Heart left ventricle (tissue), 16 donors: ENCODE measurements at regions of chrX and their contacts with region 1.

Region 1: DNA sequence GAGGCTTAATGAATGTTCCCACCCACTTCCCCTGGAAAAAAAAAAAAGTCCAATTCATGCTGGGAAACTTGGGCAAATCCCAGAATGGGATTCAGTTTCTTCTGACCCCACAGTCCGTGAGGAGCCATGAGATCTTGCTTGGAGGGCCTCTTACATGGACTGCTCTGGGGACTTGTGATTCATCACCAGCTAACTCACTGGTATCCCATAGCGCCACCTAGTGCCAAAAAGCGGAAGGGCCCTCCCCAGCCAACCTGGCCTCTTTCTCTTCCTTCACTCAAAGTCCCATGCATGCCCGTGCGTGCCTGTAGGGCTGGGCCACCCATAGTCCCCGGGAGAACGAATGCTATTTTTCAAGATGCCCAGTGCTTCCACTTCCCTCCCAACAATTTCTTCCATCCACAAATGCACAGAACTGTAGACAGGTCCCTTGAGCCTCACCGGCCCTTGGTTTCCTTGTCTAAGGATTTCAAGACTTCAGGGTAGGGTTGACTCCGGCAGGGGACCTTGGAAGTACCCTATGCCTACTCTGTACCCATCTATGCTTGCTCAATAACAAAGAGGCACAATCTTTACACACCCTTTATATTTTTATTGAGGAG is 5.1 kb downstream of the RTL5 start:
- DNase-seq: peak; percentile 80 to 85 (median 82)
- ATAC-seq: peak; percentile 81 to 89 (median 82)
- H3K4me3 ChIP-seq: no peak overlapping the region
- H3K27ac ChIP-seq: peak overlapping the region in 9 of 12 donors; percentile 20 to 80 (median 53)
- H3K4me1 ChIP-seq: peaks cover 0 to 88% (median 27%) of the 10 kb centered on the region in 12 donors
- H3K27me3 ChIP-seq: peaks cover 0 to 36% (median 0%) of the 10 kb centered on the region in 9 donors
- CTCF ChIP-seq: peak; percentile 67 to 86 (median 82)
- POLR2A ChIP-seq: no peak

Region 2: DNA sequence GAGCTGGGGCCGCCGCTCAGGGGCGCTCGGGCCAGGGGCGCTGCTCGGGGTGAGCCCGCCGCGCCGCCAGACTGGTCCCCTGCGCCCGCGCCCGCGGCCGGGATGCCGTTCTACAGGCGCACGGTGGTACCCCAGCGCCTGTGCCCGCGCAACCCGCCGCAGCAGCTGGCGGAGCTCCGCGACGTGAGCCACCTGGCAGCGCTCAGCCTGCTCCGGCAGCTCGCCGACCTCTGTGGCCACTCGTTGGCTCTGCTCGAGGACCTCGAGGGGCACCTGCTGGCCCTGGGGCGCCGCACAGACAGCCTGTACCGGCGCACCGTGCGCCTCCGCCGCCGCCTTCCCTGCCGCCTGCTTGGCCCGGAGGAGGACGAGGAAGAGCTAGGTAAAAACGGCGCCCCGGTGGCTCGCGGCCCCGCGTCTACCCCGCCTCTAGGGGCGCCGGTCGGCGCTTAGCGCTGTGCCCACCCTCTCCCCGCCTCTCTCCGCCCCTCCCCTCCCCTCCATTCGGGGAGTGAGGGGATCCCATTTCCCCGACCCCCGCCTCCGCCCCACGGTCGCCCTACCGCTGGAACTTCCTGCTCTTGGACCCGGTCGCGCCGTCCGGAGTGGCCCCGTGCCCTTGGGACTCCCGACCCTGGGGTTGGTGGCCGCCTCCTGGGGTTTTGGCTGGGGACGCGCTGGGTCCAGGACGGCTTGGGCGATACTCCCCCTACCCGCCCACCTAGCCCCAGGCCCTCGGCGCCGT is 215.5 kb before region 1 on chrX:
- intact Hi-C with region 1: loop called in 2 of 10 experiments (anchors 5 to 10 kb)
- DNase-seq: peak in 3 of 5 donors; percentile 12 to 30 (median 21)
- ATAC-seq: peak in 3 of 4 donors; percentile 20 to 72 (median 50)
- H3K4me3 ChIP-seq: peak overlapping the region; percentile 12 to 62 (median 48)
- H3K27ac ChIP-seq: peak overlapping the region in 9 of 12 donors; percentile 2 to 76 (median 59)
- H3K4me1 ChIP-seq: peaks cover 0 to 10% (median 0%) of the 10 kb centered on the region in 12 donors
- H3K27me3 ChIP-seq: peaks cover 0 to 92% (median 4%) of the 10 kb centered on the region in 9 donors
- CTCF ChIP-seq: peak in 8 of 12 donors; percentile 6 to 34 (median 20)
- POLR2A ChIP-seq: no peak

Region 3: GRCh38 chrX:71998836-71999509 is 127.7 kb before region 1 on chrX:
- intact Hi-C with region 1: loop called in 6 of 10 experiments (anchors 1 to 5 kb)
- DNase-seq: peak in 2 of 5 donors; percentile 19 to 21
- ATAC-seq: peak in 2 of 4 donors; percentile 13 to 31
- H3K4me3 ChIP-seq: no peak overlapping the region
- H3K27ac ChIP-seq: no peak overlapping the region
- H3K4me1 ChIP-seq: peaks cover 0 to 22% (median 4%) of the 10 kb centered on the region in 12 donors
- H3K27me3 ChIP-seq: peaks cover 0 to 24% (median 0%) of the 10 kb centered on the region in 9 donors
- CTCF ChIP-seq: peak; percentile 33 to 70 (median 54)
- POLR2A ChIP-seq: no peak

Region 4: GRCh38 chrX:72003811-72004750 is 122.6 kb before region 1 on chrX:
- intact Hi-C with region 1: loop called in 6 of 10 experiments (anchors 1 to 5 kb)
- DNase-seq: peak; percentile 54 to 67 (median 58)
- ATAC-seq: peak; percentile 71 to 85 (median 76)
- H3K4me3 ChIP-seq: peak overlapping the region in 2 of 12 donors; percentile 1 to 19
- H3K27ac ChIP-seq: peak overlapping the region in 9 of 12 donors; percentile 25 to 81 (median 51)
- H3K4me1 ChIP-seq: peaks cover 0 to 20% (median 8%) of the 10 kb centered on the region in 12 donors
- H3K27me3 ChIP-seq: peaks cover 0 to 30% (median 0%) of the 10 kb centered on the region in 9 donors
- CTCF ChIP-seq: peak in 5 of 12 donors; percentile 15 to 44 (median 21)
- POLR2A ChIP-seq: no peak

Region 5: GRCh38 chrX:72018277-72019112 is 108.1 kb before region 1 on chrX:
- intact Hi-C with region 1: loop called (anchors 1 to 5 kb)
- DNase-seq: peak; percentile 85 to 92 (median 89)
- ATAC-seq: peak; percentile 90 to 98 (median 98)
- H3K4me3 ChIP-seq: peak overlapping the region in 8 of 12 donors; percentile 12 to 47 (median 32)
- H3K27ac ChIP-seq: peak overlapping the region in 8 of 12 donors; percentile 38 to 80 (median 50)
- H3K4me1 ChIP-seq: peaks cover 0 to 19% (median 4%) of the 10 kb centered on the region in 12 donors
- H3K27me3 ChIP-seq: peaks cover 0 to 38% (median 0%) of the 10 kb centered on the region in 9 donors
- CTCF ChIP-seq: peak; percentile 54 to 86 (median 78)
- POLR2A ChIP-seq: no peak

Region 6: DNA sequence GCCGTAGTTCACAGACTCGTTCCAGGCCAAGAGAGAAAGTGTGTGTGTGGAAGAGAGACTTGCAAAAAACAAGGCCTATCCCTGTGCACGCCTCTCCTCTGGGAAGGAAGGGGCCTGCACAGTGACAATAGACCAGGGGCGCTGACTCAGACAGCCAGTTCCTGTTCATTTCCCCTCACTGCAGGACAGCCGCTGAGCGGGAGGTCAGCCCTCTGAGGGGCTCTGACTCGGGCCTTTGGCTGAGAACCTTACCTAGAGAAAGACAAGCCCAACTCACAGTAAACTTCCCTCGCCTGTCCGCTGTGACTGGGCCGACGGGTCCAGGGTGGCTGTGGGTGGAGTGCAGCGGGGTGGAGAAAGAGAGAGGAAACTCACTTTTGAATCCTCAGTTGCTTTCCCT is 47.0 kb before region 1 on chrX:
- intact Hi-C with region 1: loop called in 2 of 10 experiments (anchors 2 to 5 kb)
- DNase-seq: peak; percentile 57 to 75 (median 62)
- ATAC-seq: peak; percentile 84 to 96 (median 87)
- H3K4me3 ChIP-seq: peak overlapping the region in 11 of 12 donors; percentile 15 to 57 (median 42)
- H3K27ac ChIP-seq: peak overlapping the region; percentile 43 to 81 (median 74)
- H3K4me1 ChIP-seq: peaks cover 0 to 24% (median 7%) of the 10 kb centered on the region in 12 donors
- H3K27me3 ChIP-seq: peaks cover 0 to 33% (median 0%) of the 10 kb centered on the region in 9 donors
- CTCF ChIP-seq: no peak
- POLR2A ChIP-seq: no peak

Region 7: GRCh38 chrX:72159769-72160168 is 33.1 kb after region 1 on chrX:
- intact Hi-C with region 1: no loop called
- DNase-seq: no peak
- ATAC-seq: no peak
- H3K4me3 ChIP-seq: no peak overlapping the region
- H3K27ac ChIP-seq: no peak overlapping the region
- H3K4me1 ChIP-seq: no peaks in the 10 kb centered on the region
- H3K27me3 ChIP-seq: peaks cover 0 to 16% (median 0%) of the 10 kb centered on the region in 9 donors
- CTCF ChIP-seq: no peak
- POLR2A ChIP-seq: no peak

Region 8: GRCh38 chrX:72258174-72258573 is 131.5 kb after region 1 on chrX:
- intact Hi-C with region 1: no loop called
- DNase-seq: no peak
- ATAC-seq: no peak
- H3K4me3 ChIP-seq: no peak overlapping the region
- H3K27ac ChIP-seq: no peak overlapping the region
- H3K4me1 ChIP-seq: no peaks in the 10 kb centered on the region
- H3K27me3 ChIP-seq: peaks cover 0 to 34% (median 0%) of the 10 kb centered on the region in 9 donors
- CTCF ChIP-seq: no peak
- POLR2A ChIP-seq: no peak